PC-3 (cell line): ENCODE measurements at regions of chr5 and their contacts with region 1.

Region 1: DNA sequence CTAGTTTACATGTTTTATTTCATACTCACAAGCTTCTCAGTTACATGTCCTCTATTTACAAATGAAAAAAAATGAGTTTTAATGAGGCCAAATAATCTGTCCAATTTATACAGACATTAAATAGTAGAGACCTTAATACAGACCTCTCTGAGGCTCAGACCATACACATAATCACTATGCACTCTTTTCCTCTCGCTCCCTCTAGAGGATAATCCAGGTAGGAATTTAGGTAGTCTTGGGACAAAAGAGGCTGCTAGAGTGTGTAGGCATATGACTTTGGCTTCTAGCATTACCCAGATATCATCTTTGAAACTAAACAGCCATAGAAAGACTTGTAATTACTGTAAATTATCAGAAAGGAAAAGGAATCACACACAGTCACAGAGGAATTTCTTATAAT is 444.7 kb downstream of the HINT1 start:
- DNase-seq: peak; percentile 85
- ATAC-seq: peak; percentile 95
- H3K4me3 ChIP-seq: no peak overlapping the region
- H3K27ac ChIP-seq: peak overlapping the region; percentile 11
- H3K4me1 ChIP-seq: 0 out of 2 replicates have a peak, but pooled peaks cover 9% of the 10 kb centered on the region
- H3K27me3 ChIP-seq: no peaks in the 10 kb centered on the region
- CTCF ChIP-seq: peak; percentile 81

Region 2: GRCh38 chr5:130323804-130324454 is 396.4 kb before region 1 on chr5:
- CTCF ChIA-PET with region 1: no interaction called
- POLR2A ChIA-PET with region 1: no interaction called
- intact Hi-C with region 1: no loop called
- DNase-seq: peak; percentile 50
- ATAC-seq: no peak; the same call in 1 of the 2 replicates
- H3K4me3 ChIP-seq: no peak overlapping the region
- H3K27ac ChIP-seq: no peak overlapping the region
- H3K4me1 ChIP-seq: no peaks in the 10 kb centered on the region
- H3K27me3 ChIP-seq: no peaks in the 10 kb centered on the region
- CTCF ChIP-seq: no peak

Region 3: GRCh38 chr5:130400090-130400489 is 320.3 kb before region 1 on chr5:
- CTCF ChIA-PET with region 1: no interaction called
- POLR2A ChIA-PET with region 1: no interaction called
- intact Hi-C with region 1: loop called (anchors 5 kb)
- DNase-seq: peak; percentile 88
- ATAC-seq: peak; percentile 100
- H3K4me3 ChIP-seq: no peak overlapping the region
- H3K27ac ChIP-seq: peak overlapping the region; percentile 83
- H3K4me1 ChIP-seq: peaks cover 15% of the 10 kb centered on the region
- H3K27me3 ChIP-seq: no peaks in the 10 kb centered on the region
- CTCF ChIP-seq: no peak

Region 4: GRCh38 chr5:130455175-130455574 is 265.2 kb before region 1 on chr5:
- CTCF ChIA-PET with region 1: no interaction called
- POLR2A ChIA-PET with region 1: no interaction called
- intact Hi-C with region 1: loop called (anchors 5 kb)
- DNase-seq: peak; percentile 9
- ATAC-seq: peak; percentile 61
- H3K4me3 ChIP-seq: no peak overlapping the region
- H3K27ac ChIP-seq: peak overlapping the region; percentile 63
- H3K4me1 ChIP-seq: no peaks in the 10 kb centered on the region
- H3K27me3 ChIP-seq: no peaks in the 10 kb centered on the region
- CTCF ChIP-seq: no peak

Region 5: GRCh38 chr5:130496215-130496614 is 224.1 kb before region 1 on chr5:
- CTCF ChIA-PET with region 1: no interaction called
- POLR2A ChIA-PET with region 1: no interaction called
- intact Hi-C with region 1: loop called (anchors 2 kb)
- DNase-seq: peak; percentile 92
- ATAC-seq: peak; percentile 100
- H3K4me3 ChIP-seq: no peak overlapping the region
- H3K27ac ChIP-seq: peak overlapping the region; percentile 100
- H3K4me1 ChIP-seq: peaks cover 17% of the 10 kb centered on the region
- H3K27me3 ChIP-seq: no peaks in the 10 kb centered on the region
- CTCF ChIP-seq: no peak

Region 6: DNA sequence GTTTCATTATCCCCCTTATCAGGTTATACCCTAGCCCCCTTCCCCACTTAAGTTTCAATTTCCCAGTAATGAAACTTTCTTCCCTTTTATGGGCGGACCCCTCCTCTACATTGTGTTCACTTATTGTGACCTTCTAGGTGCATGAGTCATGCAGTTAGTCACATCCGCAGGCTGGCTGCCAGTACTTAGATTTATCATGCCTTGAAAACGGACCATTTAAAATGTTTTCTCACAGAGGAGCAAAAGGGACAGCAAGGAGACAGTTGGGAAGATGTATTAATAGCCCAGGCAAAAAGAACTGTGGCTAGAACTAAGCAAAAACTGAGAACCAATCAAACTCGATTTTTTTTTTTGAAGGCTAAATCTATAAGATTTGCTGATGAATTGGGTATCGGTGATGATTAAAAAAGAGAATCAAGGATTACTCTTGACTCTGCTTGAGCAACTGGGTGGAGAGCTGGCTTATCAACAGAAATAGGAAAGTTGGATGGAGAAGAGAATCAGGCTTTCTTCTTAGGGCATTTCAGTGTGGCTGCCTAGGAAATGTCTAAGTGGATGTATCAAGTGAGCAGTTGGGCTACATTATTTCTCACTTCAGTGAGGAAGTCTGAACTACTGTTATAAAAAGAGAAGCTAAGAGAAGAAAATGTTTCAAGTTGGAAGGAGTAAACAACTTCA is 170.3 kb before region 1 on chr5:
- CTCF ChIA-PET with region 1: no interaction called
- POLR2A ChIA-PET with region 1: no interaction called
- intact Hi-C with region 1: loop called (anchors 2 kb)
- DNase-seq: peak; percentile 97
- ATAC-seq: peak; percentile 73
- H3K4me3 ChIP-seq: peak overlapping the region; percentile 24; the same call in 1 of the 2 replicates
- H3K27ac ChIP-seq: peak overlapping the region; percentile 96
- H3K4me1 ChIP-seq: peaks cover 41% of the 10 kb centered on the region
- H3K27me3 ChIP-seq: no peaks in the 10 kb centered on the region
- CTCF ChIP-seq: no peak

Region 7: GRCh38 chr5:130912088-130912487 is 191.7 kb after region 1 on chr5:
- CTCF ChIA-PET with region 1: no interaction called
- POLR2A ChIA-PET with region 1: no interaction called
- intact Hi-C with region 1: loop called (anchors 5 kb)
- DNase-seq: peak; percentile 42
- ATAC-seq: no peak; the same call in 1 of the 2 replicates
- H3K4me3 ChIP-seq: no peak overlapping the region
- H3K27ac ChIP-seq: no peak overlapping the region
- H3K4me1 ChIP-seq: no peaks in the 10 kb centered on the region
- H3K27me3 ChIP-seq: no peaks in the 10 kb centered on the region
- CTCF ChIP-seq: peak; percentile 65

Region 8: GRCh38 chr5:131068893-131069643 is 348.7 kb after region 1 on chr5:
- CTCF ChIA-PET with region 1: no interaction called
- POLR2A ChIA-PET with region 1: no interaction called
- intact Hi-C with region 1: loop called (anchors 5 kb)
- DNase-seq: no peak
- ATAC-seq: no peak
- H3K4me3 ChIP-seq: no peak overlapping the region
- H3K27ac ChIP-seq: no peak overlapping the region
- H3K4me1 ChIP-seq: no peaks in the 10 kb centered on the region
- H3K27me3 ChIP-seq: no peaks in the 10 kb centered on the region
- CTCF ChIP-seq: 0 out of 2 replicates have a peak, but pooled peaks have one; percentile 8